PC-3 (cell line): ENCODE measurements at regions of chr3 and their contacts with region 1.

Region 1: GRCh38 chr3:141105828-141106628 is 54.9 kb downstream of the SPSB4 start:
- DNase-seq: peak; percentile 82
- ATAC-seq: peak; percentile 67
- H3K4me3 ChIP-seq: no peak overlapping the region
- H3K27ac ChIP-seq: no peak overlapping the region
- H3K4me1 ChIP-seq: no peaks in the 10 kb centered on the region
- H3K27me3 ChIP-seq: no peaks in the 10 kb centered on the region
- CTCF ChIP-seq: peak; percentile 74

Region 2: GRCh38 chr3:140898340-140899180 is 207.5 kb before region 1 on chr3:
- CTCF ChIA-PET with region 1: no interaction called
- POLR2A ChIA-PET with region 1: no interaction called
- intact Hi-C with region 1: loop called (anchors 1 kb)
- DNase-seq: peak; percentile 65
- ATAC-seq: peak; percentile 76
- H3K4me3 ChIP-seq: no peak overlapping the region
- H3K27ac ChIP-seq: no peak overlapping the region
- H3K4me1 ChIP-seq: no peaks in the 10 kb centered on the region
- H3K27me3 ChIP-seq: 0 out of 2 replicates have a peak, but pooled peaks cover under 1% of the 10 kb centered on the region
- CTCF ChIP-seq: peak; percentile 65

Region 3: DNA sequence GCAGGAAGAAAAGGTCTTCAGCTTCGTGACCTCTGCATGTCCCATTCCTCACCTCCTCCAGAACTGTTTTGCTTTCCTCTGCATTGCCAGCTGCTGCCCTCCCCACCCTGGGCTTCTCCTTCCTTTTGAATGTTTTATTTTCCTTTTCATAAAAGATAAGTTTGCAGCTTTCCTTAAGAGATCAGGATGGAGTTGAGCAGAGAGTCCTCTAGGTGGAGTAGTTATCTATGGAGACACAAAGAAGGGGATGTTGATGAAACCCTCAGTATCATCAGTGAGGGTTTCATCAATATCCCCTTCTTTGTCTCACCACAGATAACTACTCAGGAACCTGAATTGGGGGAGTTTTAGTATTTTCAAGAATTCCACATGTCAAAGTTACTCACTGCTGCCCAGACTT is 183.4 kb before region 1 on chr3:
- CTCF ChIA-PET with region 1: interaction called, 3 read pairs
- POLR2A ChIA-PET with region 1: no interaction called
- intact Hi-C with region 1: loop called (anchors 1 kb)
- DNase-seq: peak; percentile 39
- ATAC-seq: peak; percentile 73
- H3K4me3 ChIP-seq: no peak overlapping the region
- H3K27ac ChIP-seq: no peak overlapping the region
- H3K4me1 ChIP-seq: no peaks in the 10 kb centered on the region
- H3K27me3 ChIP-seq: 0 out of 2 replicates have a peak, but pooled peaks cover 3% of the 10 kb centered on the region
- CTCF ChIP-seq: peak; percentile 59

Region 4: GRCh38 chr3:141000027-141000663 is 105.9 kb before region 1 on chr3:
- CTCF ChIA-PET with region 1: interaction called, 3 read pairs
- POLR2A ChIA-PET with region 1: no interaction called
- intact Hi-C with region 1: loop called (anchors 2 kb)
- DNase-seq: peak; percentile 53
- ATAC-seq: peak; percentile 94
- H3K4me3 ChIP-seq: no peak overlapping the region
- H3K27ac ChIP-seq: no peak overlapping the region
- H3K4me1 ChIP-seq: no peaks in the 10 kb centered on the region
- H3K27me3 ChIP-seq: no peaks in the 10 kb centered on the region
- CTCF ChIP-seq: peak; percentile 74

Region 5: DNA sequence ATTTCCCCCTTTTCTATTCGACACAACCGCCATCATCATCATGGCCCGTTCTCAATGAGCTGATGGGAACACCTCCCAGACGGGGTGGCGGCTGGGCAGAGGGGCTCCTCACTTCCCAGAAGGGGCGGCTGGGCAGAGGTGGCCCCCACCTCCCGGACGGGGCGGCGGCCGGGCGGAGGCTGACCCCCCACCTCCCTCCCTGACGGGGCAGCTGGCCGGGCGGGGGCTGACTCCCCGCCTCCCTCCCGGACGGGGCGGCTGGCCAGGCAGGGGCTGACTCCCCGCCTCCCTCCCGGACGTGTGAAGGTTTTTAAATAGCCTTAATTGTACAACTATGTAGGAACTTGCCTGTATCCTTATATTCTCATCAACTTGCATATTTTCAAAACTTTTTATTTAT is 75.7 kb before region 1 on chr3:
- CTCF ChIA-PET with region 1: no interaction called
- POLR2A ChIA-PET with region 1: no interaction called
- intact Hi-C with region 1: no loop called
- DNase-seq: no peak
- ATAC-seq: no peak
- H3K4me3 ChIP-seq: no peak overlapping the region
- H3K27ac ChIP-seq: no peak overlapping the region
- H3K4me1 ChIP-seq: no peaks in the 10 kb centered on the region
- H3K27me3 ChIP-seq: peaks cover 53% of the 10 kb centered on the region
- CTCF ChIP-seq: no peak

Region 6: GRCh38 chr3:141192345-141192744 is 86.3 kb after region 1 on chr3:
- CTCF ChIA-PET with region 1: no interaction called
- POLR2A ChIA-PET with region 1: no interaction called
- intact Hi-C with region 1: loop called (anchors 2 kb)
- DNase-seq: peak; percentile 94
- ATAC-seq: peak; percentile 99
- H3K4me3 ChIP-seq: no peak overlapping the region
- H3K27ac ChIP-seq: no peak overlapping the region
- H3K4me1 ChIP-seq: no peaks in the 10 kb centered on the region
- H3K27me3 ChIP-seq: peaks cover 39% of the 10 kb centered on the region
- CTCF ChIP-seq: peak; percentile 92

Region 7: DNA sequence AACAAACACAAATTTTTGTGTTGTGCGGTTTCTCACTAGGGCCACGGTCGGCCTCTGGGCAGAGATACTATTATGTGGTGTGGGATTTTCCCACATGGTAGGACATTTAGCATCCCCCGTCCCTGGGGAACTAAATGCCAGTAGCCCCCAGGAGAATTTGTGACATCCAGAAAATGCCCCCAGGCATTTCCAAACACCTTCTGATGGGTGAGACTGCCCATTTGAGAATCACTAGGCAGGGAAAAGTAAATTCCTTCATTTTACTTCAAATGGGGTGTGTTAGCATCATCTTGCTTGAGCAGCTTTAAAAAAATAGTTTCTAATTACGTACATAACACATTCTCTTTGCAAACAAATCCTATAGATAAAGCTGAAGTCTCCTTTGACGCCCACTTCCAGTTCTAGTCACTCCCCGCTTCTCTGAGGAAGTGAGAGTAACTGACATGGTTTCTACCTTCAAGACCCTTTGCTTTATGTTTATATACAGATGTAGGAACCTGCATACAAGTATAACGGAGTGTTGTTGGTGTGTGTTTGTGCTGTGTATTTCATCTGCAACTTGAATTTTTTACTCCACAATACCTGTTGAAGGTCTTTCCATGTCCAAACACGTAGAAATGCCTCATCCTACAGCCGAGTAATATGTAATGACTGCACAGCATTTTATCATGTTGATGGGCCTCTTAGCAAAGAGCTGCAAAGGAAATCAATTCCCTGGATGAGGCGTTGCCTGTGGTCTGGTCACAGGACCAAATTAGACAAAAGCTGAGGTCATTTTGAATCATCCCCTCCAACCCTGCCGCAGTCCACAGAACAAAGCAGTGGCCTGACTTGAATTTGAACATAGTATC is 230.9 kb after region 1 on chr3:
- CTCF ChIA-PET with region 1: no interaction called
- POLR2A ChIA-PET with region 1: no interaction called
- intact Hi-C with region 1: no loop called
- DNase-seq: peak; percentile 72
- ATAC-seq: peak; percentile 91
- H3K4me3 ChIP-seq: no peak overlapping the region
- H3K27ac ChIP-seq: peak overlapping the region; percentile 60
- H3K4me1 ChIP-seq: peaks cover 23% of the 10 kb centered on the region
- H3K27me3 ChIP-seq: no peaks in the 10 kb centered on the region
- CTCF ChIP-seq: no peak